Naive thymus-derived CD4-positive, alpha-beta T cell (primary cell): ENCODE measurements at regions of chr5 and their contacts with region 1.

Region 1: DNA sequence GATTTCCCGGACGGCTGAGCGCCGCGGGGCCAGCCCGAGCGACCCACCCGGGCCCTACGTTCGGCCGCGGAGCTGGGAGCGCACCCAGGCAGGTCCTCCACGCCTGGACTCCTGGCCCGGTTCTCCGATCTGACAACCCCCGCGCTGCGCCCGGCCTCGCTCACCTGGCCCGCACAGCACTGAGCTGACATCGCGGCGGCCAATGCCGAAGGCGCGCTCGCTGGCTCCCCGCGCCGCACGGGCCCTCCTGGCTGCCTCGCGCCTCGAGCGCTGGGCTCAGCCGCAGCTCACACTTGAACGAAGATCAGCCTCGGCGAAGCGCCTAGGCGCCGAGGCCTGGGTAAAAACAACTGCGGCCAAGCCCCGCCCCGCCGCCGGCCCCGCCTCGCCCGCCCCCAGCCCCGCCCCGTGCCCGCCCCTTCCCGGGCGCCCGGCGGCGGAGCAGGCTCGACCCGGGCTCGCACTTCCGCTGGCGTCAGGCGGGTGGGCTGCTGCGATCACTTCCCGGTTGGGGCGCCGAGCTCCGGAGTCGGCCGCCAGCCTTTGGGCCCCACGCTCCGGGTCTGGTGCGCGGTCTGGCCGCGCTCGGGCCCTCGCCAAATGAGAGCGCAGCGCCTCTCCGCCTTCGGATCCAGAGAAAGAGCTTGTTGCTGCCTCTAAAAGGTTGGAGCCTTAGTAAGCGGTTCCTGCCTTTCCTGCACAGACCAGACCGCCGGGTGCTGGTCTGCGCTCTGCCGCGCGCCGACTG is at the start of gene SERINC5:
- DNase-seq: peak; percentile 79 to 89 (median 86)
- ATAC-seq: peak; percentile 91
- H3K4me3 ChIP-seq: peak within 1 kb of the TSS; percentile 73
- H3K4me3 Mint-ChIP-seq: peak within 1 kb of the TSS; percentile 92 to 99 (median 96)
- H3K27ac ChIP-seq: peak within 1 kb of the TSS; percentile 88
- H3K27ac Mint-ChIP-seq: peak within 1 kb of the TSS; percentile 94 to 99 (median 98)
- H3K4me1 ChIP-seq: peaks cover 19 to 30% of the 10 kb centered on the region in 2 donors
- H3K4me1 Mint-ChIP-seq: peaks cover 40 to 56% (median 46%) of the 10 kb centered on the region in 7 donors
- H3K27me3 ChIP-seq: no peaks in the 10 kb centered on the region
- H3K27me3 Mint-ChIP-seq: no peaks in the 10 kb centered on the region
- total RNA-seq, gene SERINC5: 71.2 to 164 (median 163) TPM

Region 2: GRCh38 chr5:79333852-79334557 is 921.9 kb before region 1 on chr5:
- CTCF ChIA-PET with region 1: no interaction called
- POLR2A ChIA-PET with region 1: no interaction called
- intact Hi-C with region 1: loop called in 1 of 2 experiments (anchors 5 kb)
- DNase-seq: no peak
- ATAC-seq: no peak
- H3K4me3 ChIP-seq: no peak overlapping the region
- H3K4me3 Mint-ChIP-seq: no peak overlapping the region
- H3K27ac ChIP-seq: no peak overlapping the region
- H3K27ac Mint-ChIP-seq: no peak overlapping the region
- H3K4me1 ChIP-seq: no peaks in the 10 kb centered on the region
- H3K4me1 Mint-ChIP-seq: no peaks in the 10 kb centered on the region
- H3K27me3 ChIP-seq: no peaks in the 10 kb centered on the region
- H3K27me3 Mint-ChIP-seq: peaks cover 4 to 26% (median 18%) of the 10 kb centered on the region in 5 donors

Region 3: DNA sequence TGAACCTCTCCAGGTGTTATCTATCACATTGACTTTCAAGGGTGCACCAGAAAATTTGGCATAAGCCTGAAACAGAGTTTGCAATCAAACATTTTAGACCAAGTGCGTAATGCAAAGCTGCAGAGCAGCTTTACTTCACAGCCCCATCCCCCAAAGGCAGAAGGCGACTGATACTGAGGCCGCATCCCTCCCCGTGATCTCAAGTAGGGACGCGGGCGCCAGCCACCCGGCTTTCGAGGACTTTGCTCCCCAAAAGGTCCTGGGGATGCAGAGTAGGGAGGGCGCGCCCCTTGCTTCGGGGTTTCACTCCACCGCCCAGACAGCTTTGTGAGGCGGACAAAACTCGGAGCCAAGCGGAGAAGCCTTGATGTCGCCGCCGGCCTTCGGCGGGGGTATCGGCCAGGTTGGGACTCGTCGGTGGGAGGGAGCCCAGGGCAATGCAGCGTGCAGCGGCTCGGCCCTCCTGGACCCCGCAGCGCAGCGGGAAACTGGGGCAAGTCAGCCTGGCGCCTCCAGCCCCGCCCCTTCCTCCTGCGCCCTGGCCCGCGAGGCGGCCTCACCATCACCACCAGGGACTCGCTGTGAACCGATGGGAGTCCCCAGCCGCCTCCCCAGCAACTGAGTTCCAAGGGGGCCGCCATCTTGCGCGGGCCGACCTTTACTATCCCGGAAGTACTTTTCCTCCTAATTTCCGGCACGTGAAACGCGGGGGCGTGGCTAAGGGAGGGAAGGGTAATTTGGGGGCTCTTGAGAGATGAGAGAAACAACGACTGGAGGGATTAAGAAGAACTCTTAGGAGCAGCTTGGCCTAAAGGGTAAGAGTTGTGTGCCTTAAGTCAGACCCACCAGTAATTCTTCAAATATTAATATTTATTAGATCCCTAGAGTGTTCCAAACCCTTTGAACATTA is 265.1 kb before region 1 on chr5 and contains the start of gene MTX3:
- CTCF ChIA-PET with region 1: no interaction called
- POLR2A ChIA-PET with region 1: interaction called, 4 read pairs
- intact Hi-C with region 1: loop called in 1 of 2 experiments (anchors 5 kb)
- DNase-seq: peak; percentile 65 to 85 (median 82)
- ATAC-seq: peak; percentile 97
- H3K4me3 ChIP-seq: peak within 1 kb of the TSS; percentile 80
- H3K4me3 Mint-ChIP-seq: peak within 1 kb of the TSS; percentile 76 to 93 (median 88)
- H3K27ac ChIP-seq: peak within 1 kb of the TSS; percentile 75
- H3K27ac Mint-ChIP-seq: peak within 1 kb of the TSS; percentile 82 to 95 (median 92)
- H3K4me1 ChIP-seq: peaks cover 17 to 18% of the 10 kb centered on the region in 2 donors
- H3K4me1 Mint-ChIP-seq: peaks cover 17 to 47% (median 36%) of the 10 kb centered on the region in 7 donors
- H3K27me3 ChIP-seq: no peaks in the 10 kb centered on the region
- H3K27me3 Mint-ChIP-seq: peaks cover 0 to 13% (median 8%) of the 10 kb centered on the region in 5 donors
- total RNA-seq, gene MTX3: 12.9 to 31.0 (median 24.4) TPM

Region 4: DNA sequence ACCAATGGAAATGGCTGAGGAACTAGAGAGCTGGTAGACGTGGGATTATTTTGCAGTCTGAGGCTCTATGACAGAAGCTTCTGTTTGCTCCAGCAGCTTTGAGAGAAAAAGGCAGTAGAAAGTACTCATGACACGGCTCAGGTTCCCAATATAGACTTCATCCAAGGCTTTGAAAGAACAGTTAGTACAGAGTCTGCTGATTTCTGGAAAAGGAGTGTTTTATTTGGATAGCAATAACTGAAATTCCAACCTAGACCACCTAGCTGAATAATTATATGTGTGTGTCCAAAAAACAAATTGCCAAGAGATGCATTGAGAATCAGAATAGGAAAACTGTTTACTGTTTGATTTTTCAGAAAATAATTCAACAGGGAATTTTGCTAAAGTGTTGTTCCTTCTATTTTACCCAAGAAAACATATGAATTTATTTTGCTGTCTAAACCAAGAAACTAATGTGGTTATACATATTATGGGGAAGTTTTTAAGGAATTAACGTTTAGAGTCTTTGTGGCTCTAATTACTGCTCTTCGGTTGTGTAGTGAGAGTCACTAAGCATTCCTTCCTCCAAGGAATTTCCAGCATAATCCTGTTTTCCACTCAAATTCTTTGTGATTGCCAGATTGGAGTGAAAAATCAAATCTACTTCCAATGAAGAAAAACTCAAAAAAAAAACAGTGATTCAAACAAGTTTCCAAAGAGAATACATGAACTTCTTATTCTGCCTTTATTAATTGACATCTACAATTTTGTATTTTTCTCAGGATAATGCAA is 246.7 kb before region 1 on chr5:
- CTCF ChIA-PET with region 1: no interaction called
- POLR2A ChIA-PET with region 1: no interaction called
- intact Hi-C with region 1: no loop called
- DNase-seq: no peak
- ATAC-seq: no peak
- H3K4me3 ChIP-seq: no peak overlapping the region
- H3K4me3 Mint-ChIP-seq: no peak overlapping the region
- H3K27ac ChIP-seq: no peak overlapping the region
- H3K27ac Mint-ChIP-seq: no peak overlapping the region
- H3K4me1 ChIP-seq: no peaks in the 10 kb centered on the region
- H3K4me1 Mint-ChIP-seq: no peaks in the 10 kb centered on the region
- H3K27me3 ChIP-seq: no peaks in the 10 kb centered on the region
- H3K27me3 Mint-ChIP-seq: peaks cover 0 to 5% (median 0%) of the 10 kb centered on the region in 5 donors

Region 5: DNA sequence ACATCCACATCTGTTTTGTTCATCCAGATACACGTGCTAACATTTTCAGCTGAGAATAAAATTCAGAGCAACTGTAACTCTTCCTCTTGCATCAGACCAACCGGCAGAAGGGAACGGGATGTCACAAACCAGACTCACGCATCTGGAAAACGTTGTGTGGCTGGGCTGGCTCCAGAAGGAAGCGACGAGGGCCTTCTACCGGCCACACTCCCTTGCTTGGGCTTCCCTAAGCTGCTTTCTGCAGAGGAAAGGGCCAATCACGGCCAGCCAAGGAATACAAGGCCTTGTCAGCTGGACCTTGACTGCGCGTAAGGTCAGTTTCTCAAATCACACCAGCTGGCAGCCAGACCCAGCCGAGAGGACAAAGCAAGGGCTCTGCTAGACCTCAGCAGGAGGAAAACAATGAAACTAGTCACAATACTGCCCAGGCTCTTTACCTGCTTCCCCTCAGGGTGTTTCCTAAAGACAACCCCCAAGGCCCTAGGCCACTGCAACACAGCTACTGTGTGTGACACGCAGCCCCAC is 114.7 kb before region 1 on chr5:
- CTCF ChIA-PET with region 1: interaction called, 5 read pairs
- POLR2A ChIA-PET with region 1: interaction called, 36 read pairs
- intact Hi-C with region 1: loop called (anchors 1 to 5 kb)
- DNase-seq: peak in 1 of 9 donors; percentile 18
- ATAC-seq: no peak
- H3K4me3 ChIP-seq: no peak overlapping the region
- H3K4me3 Mint-ChIP-seq: peak overlapping the region in 9 of 10 donors; percentile 27 to 66 (median 47)
- H3K27ac ChIP-seq: peak overlapping the region; percentile 64
- H3K27ac Mint-ChIP-seq: peak overlapping the region; percentile 83 to 95 (median 89)
- H3K4me1 ChIP-seq: peaks cover 37 to 75% of the 10 kb centered on the region in 2 donors
- H3K4me1 Mint-ChIP-seq: peaks cover 58 to 99% (median 75%) of the 10 kb centered on the region in 7 donors
- H3K27me3 ChIP-seq: no peaks in the 10 kb centered on the region
- H3K27me3 Mint-ChIP-seq: no peaks in the 10 kb centered on the region

Region 6: DNA sequence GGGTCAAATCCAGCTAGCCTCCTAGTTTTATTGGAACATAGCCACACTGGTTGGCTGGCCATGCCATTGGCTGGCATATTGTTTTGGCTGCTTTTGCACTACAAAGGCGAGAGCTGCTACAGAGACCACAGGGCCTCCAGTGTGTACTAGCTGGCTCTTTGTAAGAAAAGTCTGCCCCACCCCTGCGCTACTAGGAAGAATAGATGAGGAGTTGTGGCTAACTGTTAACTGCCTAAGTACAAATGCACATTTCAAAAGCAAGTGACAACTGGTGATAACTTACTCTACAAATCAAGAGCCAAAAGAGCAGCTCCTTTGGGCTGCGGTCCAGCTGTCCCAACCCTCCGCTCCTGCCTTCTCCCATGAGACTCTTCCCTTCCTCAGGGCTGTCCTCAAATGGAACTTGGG is 63.9 kb before region 1 on chr5:
- CTCF ChIA-PET with region 1: interaction called, 4 read pairs
- POLR2A ChIA-PET with region 1: interaction called, 108 read pairs
- intact Hi-C with region 1: loop called (anchors 1 kb)
- DNase-seq: peak in 7 of 9 donors; percentile 61 to 72 (median 68)
- ATAC-seq: peak; percentile 85
- H3K4me3 ChIP-seq: peak overlapping the region; percentile 46
- H3K4me3 Mint-ChIP-seq: peak overlapping the region; percentile 79 to 96 (median 85)
- H3K27ac ChIP-seq: peak overlapping the region; percentile 79
- H3K27ac Mint-ChIP-seq: peak overlapping the region; percentile 87 to 99 (median 95)
- H3K4me1 ChIP-seq: peaks cover 69 to 89% of the 10 kb centered on the region in 2 donors
- H3K4me1 Mint-ChIP-seq: peaks cover 61 to 97% (median 87%) of the 10 kb centered on the region in 7 donors
- H3K27me3 ChIP-seq: no peaks in the 10 kb centered on the region
- H3K27me3 Mint-ChIP-seq: no peaks in the 10 kb centered on the region

Region 7: DNA sequence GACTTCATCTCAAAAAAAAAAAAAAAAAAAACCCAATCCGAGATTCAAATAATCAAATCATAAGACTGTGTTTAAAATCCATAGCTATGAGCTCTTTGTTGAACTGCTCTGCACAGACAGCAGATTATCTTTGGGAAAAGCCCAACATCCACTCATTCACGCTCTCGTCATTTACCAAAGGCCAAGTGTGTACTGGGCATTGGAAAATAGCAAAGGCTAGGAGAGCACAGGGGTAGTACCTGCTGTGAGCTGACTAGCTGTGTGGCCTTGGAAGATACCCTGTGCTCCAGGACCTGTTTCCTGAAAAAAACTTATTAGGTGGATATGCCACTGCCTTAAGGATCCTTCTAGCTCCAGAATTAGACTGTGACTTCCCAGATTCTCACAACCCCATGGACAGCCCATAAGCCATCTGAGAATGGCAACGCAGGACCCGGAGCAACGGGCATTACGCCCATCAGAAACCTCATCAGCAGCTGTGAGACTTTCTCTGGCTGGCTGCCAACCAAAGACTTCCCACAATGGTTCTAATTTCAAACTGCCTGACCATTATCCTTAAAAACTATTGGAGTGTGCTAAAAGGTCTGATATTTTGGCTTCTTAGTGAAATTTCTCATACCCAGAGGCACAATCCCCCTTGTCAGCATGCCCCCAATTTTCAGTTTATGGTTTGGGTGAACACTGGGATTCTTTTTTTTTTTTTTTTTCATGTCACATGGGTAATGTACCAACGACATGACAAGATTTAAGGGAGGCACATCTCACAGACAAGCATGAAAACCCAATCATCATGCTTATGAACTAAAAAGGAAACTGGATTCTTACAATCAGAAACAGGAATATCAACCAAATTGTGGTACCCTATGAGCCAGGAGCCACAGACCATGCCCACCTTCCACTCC is 16.9 kb before region 1 on chr5:
- CTCF ChIA-PET with region 1: no interaction called
- POLR2A ChIA-PET with region 1: interaction called, 44 read pairs
- intact Hi-C with region 1: loop called in 1 of 2 experiments (anchors 1 kb)
- DNase-seq: no peak
- ATAC-seq: no peak
- H3K4me3 ChIP-seq: no peak overlapping the region
- H3K4me3 Mint-ChIP-seq: peak overlapping the region in 9 of 10 donors; percentile 59 to 89 (median 73)
- H3K27ac ChIP-seq: peak overlapping the region; percentile 31
- H3K27ac Mint-ChIP-seq: peak overlapping the region in 8 of 9 donors; percentile 72 to 93 (median 84)
- H3K4me1 ChIP-seq: peaks cover 11 to 59% of the 10 kb centered on the region in 2 donors
- H3K4me1 Mint-ChIP-seq: peaks cover 40 to 86% (median 77%) of the 10 kb centered on the region in 7 donors
- H3K27me3 ChIP-seq: no peaks in the 10 kb centered on the region
- H3K27me3 Mint-ChIP-seq: no peaks in the 10 kb centered on the region

Region 8: DNA sequence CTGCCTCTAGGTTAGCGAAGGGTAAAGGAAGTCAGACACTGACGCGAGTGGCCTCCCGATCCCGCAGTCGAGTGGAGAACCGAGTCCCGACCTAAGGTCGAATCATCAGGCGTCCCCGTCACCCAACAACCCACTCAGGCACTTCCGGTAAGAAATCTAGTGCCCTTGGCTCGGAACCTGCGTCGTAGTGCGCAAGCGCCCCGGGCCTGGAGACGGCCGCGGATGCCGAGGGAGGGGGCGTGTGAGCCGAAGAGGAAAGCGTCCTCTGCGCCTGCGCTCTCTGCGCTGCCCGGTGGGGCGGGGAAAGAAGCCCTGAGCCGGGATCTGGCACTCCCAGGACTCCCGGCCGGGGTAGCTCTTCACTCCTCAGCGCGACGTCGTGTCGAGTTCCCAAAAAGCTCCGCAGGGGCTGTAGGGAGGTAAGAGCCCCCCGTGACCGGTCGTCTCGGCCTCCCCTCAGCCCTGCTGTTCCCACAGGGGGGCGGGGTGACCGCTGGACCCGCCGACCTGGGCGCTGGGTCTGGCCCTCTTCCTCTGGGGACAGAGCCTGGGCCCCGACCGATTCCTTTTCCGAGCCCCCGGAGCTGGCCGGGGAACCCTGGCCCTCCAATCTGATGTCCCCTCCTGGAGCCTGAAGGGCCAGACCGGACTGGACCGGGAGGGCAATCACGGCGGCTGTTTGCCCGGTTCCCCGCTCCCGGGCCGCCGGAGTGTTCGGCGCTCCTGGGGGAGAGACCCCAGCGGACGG is 152.0 kb after region 1 on chr5 and contains the start of gene ZFYVE16:
- CTCF ChIA-PET with region 1: no interaction called
- POLR2A ChIA-PET with region 1: no interaction called
- intact Hi-C with region 1: loop called (anchors 1 to 5 kb)
- DNase-seq: peak; percentile 93 to 98 (median 94)
- ATAC-seq: peak; percentile 93
- H3K4me3 ChIP-seq: peak within 1 kb of the TSS; percentile 94
- H3K4me3 Mint-ChIP-seq: peak within 1 kb of the TSS; percentile 91 to 99 (median 96)
- H3K27ac ChIP-seq: peak within 1 kb of the TSS; percentile 85
- H3K27ac Mint-ChIP-seq: peak within 1 kb of the TSS; percentile 97 to 100 (median 99)
- H3K4me1 ChIP-seq: peaks cover 0 to 3% of the 10 kb centered on the region in 2 donors
- H3K4me1 Mint-ChIP-seq: peaks cover 20 to 32% (median 21%) of the 10 kb centered on the region in 7 donors
- H3K27me3 ChIP-seq: no peaks in the 10 kb centered on the region
- H3K27me3 Mint-ChIP-seq: peaks cover 0 to 7% (median 0%) of the 10 kb centered on the region in 5 donors
- total RNA-seq, gene ZFYVE16: 12.0 to 32.0 (median 26.0) TPM